Left ventricle myocardium inferior (tissue), 1 donor: ENCODE measurements at regions of chr10 and their contacts with region 1.

Region 1: GRCh38 chr10:4656576-4657182 is 169.3 kb upstream of the AKR1E2 start:
- DNase-seq: peak; percentile 47
- H3K4me3 ChIP-seq: no peak overlapping the region
- H3K27ac ChIP-seq: no peak overlapping the region
- H3K4me1 ChIP-seq: peaks cover 40% of the 10 kb centered on the region
- H3K27me3 ChIP-seq: no peaks in the 10 kb centered on the region
- CTCF ChIP-seq: peak; percentile 95

Region 2: DNA sequence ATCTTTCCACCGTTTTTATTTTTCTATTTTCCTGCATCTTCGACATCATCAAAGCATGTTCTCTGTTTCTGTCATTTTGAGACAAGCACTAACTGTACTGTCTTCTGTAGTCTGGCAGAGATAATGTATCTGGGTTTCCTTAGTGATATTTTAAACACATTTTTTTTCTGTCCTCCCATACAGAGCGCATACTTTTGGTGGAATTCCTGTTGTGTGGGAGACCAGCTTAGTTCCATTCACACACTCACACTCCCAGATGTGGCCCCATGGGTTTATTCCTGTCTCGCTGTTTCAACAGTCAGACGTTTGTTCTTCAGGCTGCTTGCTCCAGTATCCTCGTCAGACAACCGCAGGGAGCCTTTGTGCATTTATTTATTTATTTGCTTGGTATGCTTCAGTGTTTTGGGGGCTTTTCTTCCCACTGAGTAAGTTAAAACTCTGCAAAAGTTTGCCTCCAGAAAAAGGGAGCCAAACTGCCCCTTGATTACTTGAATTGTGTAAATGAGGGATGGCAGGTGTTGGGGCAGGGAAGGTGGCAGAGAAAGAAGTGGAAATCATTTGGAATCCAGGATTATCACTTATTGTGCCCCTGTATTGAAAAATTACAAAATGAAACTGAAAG is 414.8 kb before region 1 on chr10:
- intact Hi-C with region 1: loop called (anchors 10 kb)
- DNase-seq: peak; percentile 30
- H3K4me3 ChIP-seq: peak overlapping the region; percentile 58
- H3K27ac ChIP-seq: peak overlapping the region; percentile 91
- H3K4me1 ChIP-seq: peaks cover 56% of the 10 kb centered on the region
- H3K27me3 ChIP-seq: no peaks in the 10 kb centered on the region
- CTCF ChIP-seq: no peak

Region 3: DNA sequence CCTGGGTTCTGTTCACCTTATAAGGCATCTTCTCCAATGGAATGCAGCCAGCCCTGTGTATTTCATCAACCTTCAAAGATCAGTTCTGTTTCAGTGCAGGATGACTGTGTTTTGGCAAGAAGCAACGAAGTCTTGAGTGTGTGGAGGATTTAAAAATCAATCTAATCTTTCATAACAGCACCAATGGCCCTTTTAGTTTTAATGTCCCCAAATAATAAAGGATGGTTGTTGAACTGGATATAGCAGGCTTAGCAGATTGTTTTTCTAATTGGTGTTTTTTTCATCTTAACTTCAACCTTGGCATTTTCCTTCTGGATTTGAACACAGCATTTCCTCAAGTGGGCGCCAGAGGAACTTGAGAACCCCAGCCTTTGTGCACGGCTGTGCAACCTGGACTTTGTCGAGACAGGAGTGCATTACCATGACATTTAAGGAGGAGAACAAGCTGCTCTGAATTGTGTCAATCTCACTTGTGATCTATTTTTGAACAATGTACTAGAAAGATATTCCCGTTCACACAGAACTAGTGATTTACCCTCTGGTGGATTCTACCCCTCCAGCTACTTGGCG is 143.9 kb before region 1 on chr10:
- intact Hi-C with region 1: loop called (anchors 5 kb)
- DNase-seq: peak; percentile 43
- H3K4me3 ChIP-seq: no peak overlapping the region
- H3K27ac ChIP-seq: peak overlapping the region; percentile 89
- H3K4me1 ChIP-seq: peaks cover 44% of the 10 kb centered on the region
- H3K27me3 ChIP-seq: no peaks in the 10 kb centered on the region
- CTCF ChIP-seq: peak; percentile 71